Heart right ventricle (tissue), 16 donors: ENCODE measurements at regions of chr18 and their contacts with region 1.

Region 1: GRCh38 chr18:830315-830901 is 18.4 kb upstream of the YES1 start:
- DNase-seq: peak in 1 of 2 donors; percentile 51
- ATAC-seq: peak; percentile 79 to 94 (median 90)
- H3K4me3 ChIP-seq: no peak overlapping the region
- H3K27ac ChIP-seq: peak overlapping the region in 9 of 10 donors; percentile 22 to 79 (median 58)
- H3K4me1 ChIP-seq: peaks cover 0 to 30% (median 15%) of the 10 kb centered on the region in 9 donors
- H3K27me3 ChIP-seq: peaks cover 0 to 42% (median 0%) of the 10 kb centered on the region in 7 donors
- CTCF ChIP-seq: no peak

Region 2: GRCh38 chr18:267688-268552 is 562.5 kb before region 1 on chr18 and contains the start of gene THOC1:
- intact Hi-C with region 1: loop called in 2 of 10 experiments (anchors 5 to 10 kb)
- DNase-seq: peak; percentile 91 to 93
- ATAC-seq: peak; percentile 97 to 99 (median 98)
- H3K4me3 ChIP-seq: peak within 1 kb of the TSS; percentile 73 to 93 (median 84)
- H3K27ac ChIP-seq: peak within 1 kb of the TSS; percentile 50 to 96 (median 90)
- H3K4me1 ChIP-seq: peaks cover 0 to 27% (median 25%) of the 10 kb centered on the region in 9 donors
- H3K27me3 ChIP-seq: no peaks in the 10 kb centered on the region
- CTCF ChIP-seq: no peak
- total RNA-seq, gene THOC1: 7.7 to 14.7 (median 9.8) TPM

Region 3: GRCh38 chr18:361939-362309 is 468.5 kb before region 1 on chr18:
- intact Hi-C with region 1: no loop called
- DNase-seq: no peak
- ATAC-seq: peak in 5 of 8 donors; percentile 16 to 88 (median 42)
- H3K4me3 ChIP-seq: no peak overlapping the region
- H3K27ac ChIP-seq: peak overlapping the region in 2 of 10 donors; percentile 21 to 47
- H3K4me1 ChIP-seq: peaks cover 0 to 33% (median 0%) of the 10 kb centered on the region in 9 donors
- H3K27me3 ChIP-seq: no peaks in the 10 kb centered on the region
- CTCF ChIP-seq: no peak

Region 4: GRCh38 chr18:623761-624620 is 206.4 kb before region 1 on chr18:
- intact Hi-C with region 1: loop called in 7 of 10 experiments (anchors 2 to 10 kb)
- DNase-seq: peak; percentile 43 to 62
- ATAC-seq: peak in 5 of 8 donors; percentile 49 to 75 (median 73)
- H3K4me3 ChIP-seq: no peak overlapping the region
- H3K27ac ChIP-seq: no peak overlapping the region
- H3K4me1 ChIP-seq: no peaks in the 10 kb centered on the region
- H3K27me3 ChIP-seq: peaks cover 0 to 16% (median 0%) of the 10 kb centered on the region in 7 donors
- CTCF ChIP-seq: peak; percentile 48 to 85 (median 80)

Region 5: GRCh38 chr18:629269-630150 is 200.9 kb before region 1 on chr18:
- intact Hi-C with region 1: loop called in 7 of 10 experiments (anchors 2 to 10 kb)
- DNase-seq: no peak
- ATAC-seq: no peak
- H3K4me3 ChIP-seq: no peak overlapping the region
- H3K27ac ChIP-seq: no peak overlapping the region
- H3K4me1 ChIP-seq: no peaks in the 10 kb centered on the region
- H3K27me3 ChIP-seq: peaks cover 0 to 8% (median 0%) of the 10 kb centered on the region in 7 donors
- CTCF ChIP-seq: no peak

Region 6: DNA sequence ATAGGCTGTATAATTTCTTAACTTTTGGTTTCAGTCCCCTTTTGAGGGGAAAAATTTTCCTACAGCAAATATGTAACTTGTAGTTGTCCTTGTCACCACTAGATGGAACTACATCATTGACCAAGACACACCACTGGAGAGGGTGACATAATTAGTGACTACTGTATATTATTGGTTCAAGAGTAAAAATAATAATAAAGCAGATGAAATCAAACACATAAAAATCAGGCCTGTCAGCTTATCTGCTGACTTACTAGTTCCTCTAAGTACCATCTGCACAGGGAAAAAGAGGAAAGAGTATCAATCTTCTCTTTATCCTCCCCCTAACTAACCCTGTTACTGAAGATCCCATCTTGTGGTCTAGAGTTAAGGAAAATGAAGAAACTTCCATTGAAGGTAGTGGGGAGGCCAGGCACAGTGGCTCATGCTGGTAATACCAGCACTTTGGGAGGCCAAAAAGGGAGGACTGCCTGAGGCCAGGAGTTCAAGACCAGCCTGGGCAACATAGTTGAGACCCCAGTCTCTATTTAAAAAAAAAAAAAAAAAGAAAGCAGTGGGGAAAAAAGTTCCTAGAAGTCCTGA is 88.4 kb before region 1 on chr18:
- intact Hi-C with region 1: loop called (anchors 1 to 5 kb)
- DNase-seq: no peak
- ATAC-seq: peak; percentile 55 to 87 (median 76)
- H3K4me3 ChIP-seq: no peak overlapping the region
- H3K27ac ChIP-seq: peak overlapping the region in 2 of 10 donors; percentile 21 to 42
- H3K4me1 ChIP-seq: peaks cover 0 to 10% (median 0%) of the 10 kb centered on the region in 9 donors
- H3K27me3 ChIP-seq: no peaks in the 10 kb centered on the region
- CTCF ChIP-seq: peak; percentile 65 to 89 (median 80)

Region 7: DNA sequence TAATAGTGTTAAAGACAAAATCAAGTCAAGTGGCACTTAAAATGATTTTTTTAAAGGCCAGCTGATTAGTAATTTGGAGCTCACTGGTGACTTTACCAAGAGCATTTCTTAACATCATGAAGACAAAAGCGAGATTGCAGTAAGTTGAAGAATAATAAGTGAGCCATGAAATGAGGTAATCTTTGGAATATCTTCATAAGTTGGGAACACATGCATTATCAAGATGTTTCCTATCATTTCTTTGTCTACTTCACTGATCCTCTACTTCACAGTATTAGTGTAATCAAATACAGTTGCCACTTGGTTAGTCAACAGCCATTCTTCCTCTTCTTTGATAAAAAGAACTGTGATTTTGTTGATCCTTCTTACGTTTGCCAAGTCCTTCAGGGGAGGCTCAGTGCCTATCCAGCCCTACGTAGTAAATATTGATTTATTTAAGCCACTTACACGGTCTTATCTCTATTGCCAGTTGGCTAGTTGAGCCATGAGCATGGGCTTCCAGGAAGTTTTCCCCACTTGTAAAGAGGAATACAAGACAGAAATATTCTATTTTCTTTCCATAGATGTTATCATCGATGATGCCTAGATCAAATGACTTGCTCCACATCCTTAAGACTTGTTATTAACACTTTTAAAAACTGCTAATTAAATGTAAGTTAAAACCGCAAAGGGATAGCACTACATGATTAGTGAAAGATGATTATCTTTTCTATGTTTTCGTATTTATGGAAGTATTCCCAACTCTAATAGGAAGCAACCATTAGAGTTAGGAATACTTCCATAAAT is 64.5 kb before region 1 on chr18:
- intact Hi-C with region 1: no loop called
- DNase-seq: no peak
- ATAC-seq: no peak
- H3K4me3 ChIP-seq: no peak overlapping the region
- H3K27ac ChIP-seq: no peak overlapping the region
- H3K4me1 ChIP-seq: peaks cover 0 to 36% (median 7%) of the 10 kb centered on the region in 9 donors
- H3K27me3 ChIP-seq: no peaks in the 10 kb centered on the region
- CTCF ChIP-seq: no peak